ENCODE measurements at regions of chr2 and their contacts with region 1.

Region 1: DNA sequence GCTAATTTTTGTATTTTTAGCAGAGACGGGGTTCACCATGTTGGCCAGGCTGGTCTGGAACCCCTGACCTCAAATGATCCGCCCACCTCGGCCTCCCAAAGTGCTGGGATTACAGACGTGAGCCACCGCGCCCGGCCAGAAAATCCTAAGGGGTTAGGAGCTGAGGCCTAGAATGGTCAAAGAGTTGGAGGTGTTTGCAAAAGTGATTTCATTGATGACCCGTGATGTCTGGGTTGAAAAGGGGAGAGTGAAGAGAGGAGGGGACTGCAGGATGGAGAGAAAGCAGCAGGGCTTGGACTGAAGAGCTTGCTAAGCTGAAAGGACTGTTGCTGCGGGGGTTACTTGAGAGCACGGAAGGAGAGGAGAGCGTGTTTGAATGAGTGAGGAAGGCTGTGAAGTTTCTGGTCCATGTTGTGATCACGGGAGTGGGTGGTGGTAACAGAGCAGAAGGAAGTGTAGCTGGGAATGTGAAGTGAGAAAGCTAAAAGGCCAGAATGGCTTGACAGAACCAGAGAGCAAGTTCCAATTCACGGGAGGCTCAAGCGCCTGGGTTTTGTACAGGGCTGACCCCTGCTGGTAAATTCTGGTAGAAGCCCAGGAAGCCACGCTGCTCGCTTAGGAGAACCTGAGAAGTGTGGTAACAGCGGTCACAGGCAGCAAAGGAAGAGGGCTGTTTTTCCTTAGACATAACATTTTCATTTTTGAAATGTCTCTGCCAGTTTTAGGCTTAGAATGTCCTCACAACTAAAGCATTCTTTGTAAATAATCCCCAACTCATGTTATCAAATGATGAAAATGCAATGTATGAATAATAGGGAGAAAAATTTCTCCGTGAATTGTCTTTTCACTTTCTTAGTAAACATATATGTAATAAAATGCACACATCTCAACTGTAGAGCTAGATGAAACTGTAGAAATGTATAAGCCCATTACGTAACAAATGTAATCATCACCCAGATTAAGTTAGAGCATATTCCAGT is 40.5 kb upstream of the ACTR2 start:
- DNase-seq: peak; percentile 85 to 86
- ATAC-seq: peak; percentile 88
- H3K4me3 ChIP-seq: no peak overlapping the region
- H3K27ac ChIP-seq: no peak overlapping the region
- H3K4me1 ChIP-seq: no peaks in the 10 kb centered on the region
- H3K27me3 ChIP-seq: no peaks in the 10 kb centered on the region

Region 2: GRCh38 chr2:64914735-64915509 is 272.2 kb before region 1 on chr2:
- intact Hi-C with region 1: loop called (anchors 5 kb)
- DNase-seq: no peak
- ATAC-seq: no peak
- H3K4me3 ChIP-seq: no peak overlapping the region
- H3K27ac ChIP-seq: no peak overlapping the region
- H3K4me1 ChIP-seq: no peaks in the 10 kb centered on the region
- H3K27me3 ChIP-seq: no peaks in the 10 kb centered on the region

Region 3: DNA sequence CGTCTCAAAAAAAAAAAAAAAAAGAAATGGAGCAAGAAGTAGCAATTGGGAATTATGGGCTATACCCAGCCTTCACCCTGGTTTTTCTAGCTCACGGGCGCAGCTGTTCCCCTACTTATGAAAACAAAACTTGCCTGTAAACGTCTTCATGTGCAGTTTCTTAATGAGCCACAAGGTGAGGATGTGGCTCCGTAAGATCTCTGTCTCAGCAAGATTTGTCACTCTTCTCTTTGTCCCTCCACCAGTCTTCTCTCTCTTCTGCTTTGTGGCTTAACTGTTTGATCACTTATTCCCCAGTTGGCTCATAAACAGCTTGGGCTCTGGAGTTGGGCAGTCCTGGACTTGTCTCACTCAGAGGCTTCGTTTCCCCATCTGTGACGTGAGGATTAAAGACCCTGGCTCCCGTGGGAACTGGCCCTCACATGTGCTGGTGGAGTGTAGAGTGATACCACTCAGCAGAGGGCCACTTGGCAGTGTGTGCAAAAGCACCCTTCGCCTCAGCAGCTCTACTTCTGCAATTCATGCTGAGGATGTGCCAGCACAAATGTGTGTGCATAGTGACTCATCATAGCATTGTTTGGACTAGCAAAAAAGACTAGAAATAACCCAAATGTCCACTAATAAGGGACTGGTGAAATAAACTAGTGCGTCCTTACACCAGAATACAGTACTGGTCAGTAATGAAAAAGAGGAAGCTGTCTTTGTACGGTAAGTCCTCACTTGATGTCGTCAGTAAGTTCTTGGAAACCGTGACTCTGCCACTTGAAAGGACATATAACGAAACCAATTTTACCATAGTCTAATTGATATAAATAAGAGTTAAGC is 122.2 kb before region 1 on chr2:
- intact Hi-C with region 1: loop called (anchors 5 kb)
- DNase-seq: peak; percentile 82 to 83
- ATAC-seq: peak; percentile 84
- H3K4me3 ChIP-seq: no peak overlapping the region
- H3K27ac ChIP-seq: peak overlapping the region in 1 of 2 donors; percentile 12
- H3K4me1 ChIP-seq: peaks cover 0 to 2% of the 10 kb centered on the region in 2 donors
- H3K27me3 ChIP-seq: no peaks in the 10 kb centered on the region

Measured in aorta (tissue), 5 donors.